ENCODE measurements at regions of chr7 and their contacts with region 1.

Region 1: DNA sequence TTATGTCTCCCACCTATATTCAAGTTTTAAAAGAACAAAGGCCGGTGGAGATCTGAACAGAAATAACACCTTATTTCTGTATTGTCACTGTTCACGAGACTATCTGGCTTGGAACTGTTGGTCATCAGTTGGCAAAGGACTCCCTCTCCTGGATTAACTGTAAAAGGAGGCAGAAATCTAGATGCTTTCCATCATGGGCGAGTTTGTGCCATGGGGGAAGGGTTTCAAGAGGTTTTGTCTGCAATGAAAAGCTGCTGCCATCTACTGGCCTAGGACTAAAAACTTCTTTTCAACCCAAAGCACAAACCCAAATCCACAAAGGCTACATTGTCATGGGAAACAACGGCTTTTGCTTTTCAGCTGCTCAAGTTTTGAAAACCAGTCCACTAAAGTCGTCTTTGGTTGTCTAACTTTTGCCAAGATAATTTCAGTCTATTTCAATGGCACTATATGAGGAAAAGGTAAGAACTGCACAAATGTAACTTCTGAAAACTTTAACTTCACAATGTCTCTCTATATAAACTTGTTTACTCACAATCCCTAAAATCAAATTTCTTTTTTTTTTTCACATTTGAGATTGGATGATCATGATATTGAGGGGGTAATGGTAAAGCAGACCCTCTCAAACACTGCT is 196.8 kb downstream of the SKAP2 start:
- DNase-seq: peak; percentile 84 to 94
- H3K4me3 ChIP-seq: no peak overlapping the region
- H3K27ac ChIP-seq: no peak overlapping the region
- H3K4me1 ChIP-seq: peaks cover 61% of the 10 kb centered on the region
- H3K27me3 ChIP-seq: no peaks in the 10 kb centered on the region
- CTCF ChIP-seq: peak; percentile 99

Region 2: DNA sequence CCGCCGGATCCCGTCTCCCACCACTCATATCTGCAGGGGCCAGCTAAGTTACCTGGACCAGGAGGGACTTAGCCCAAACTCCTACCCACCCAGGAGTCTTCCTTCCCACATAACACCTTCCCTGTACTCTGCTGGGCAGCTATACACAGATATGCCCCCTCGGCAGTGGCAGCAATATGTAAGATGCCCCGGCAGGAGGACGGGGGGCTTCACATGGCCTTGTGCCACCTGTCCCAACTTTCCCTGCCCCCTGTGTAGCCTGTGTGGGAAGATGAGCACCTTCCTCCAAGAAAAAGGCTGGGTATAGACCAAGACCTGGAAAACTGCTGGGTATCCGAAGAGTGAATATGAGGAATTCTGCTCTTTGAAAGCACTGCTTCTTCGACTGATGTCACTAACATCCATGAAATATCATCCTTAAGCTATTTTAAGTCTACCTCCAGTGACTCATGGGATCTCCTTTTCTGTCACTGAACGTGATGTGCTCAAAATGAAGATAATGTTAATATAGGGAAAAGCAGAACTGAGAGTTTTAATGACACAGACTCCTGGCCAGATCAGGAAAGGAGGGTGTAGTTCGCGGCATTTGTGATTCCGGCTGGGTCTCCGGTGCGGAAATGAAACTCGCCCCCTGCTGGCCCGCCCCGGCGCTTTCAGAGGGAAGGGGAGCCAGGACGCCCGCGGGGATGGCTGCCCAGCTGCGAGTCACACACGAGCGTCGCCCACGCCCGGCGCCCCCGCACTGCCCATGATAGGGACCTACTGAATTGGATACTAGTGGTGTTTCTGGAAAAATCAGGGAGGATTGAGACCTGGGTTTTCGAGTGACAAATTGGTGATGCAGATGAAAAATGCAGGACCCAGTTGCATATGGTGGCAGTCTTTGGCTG is 772.5 kb before region 1 on chr7:
- CTCF ChIA-PET with region 1: no interaction called
- POLR2A ChIA-PET with region 1: no interaction called
- intact Hi-C with region 1: loop called (anchors 1 kb)
- DNase-seq: peak in 1 of 2 experiments; percentile 24
- H3K4me3 ChIP-seq: peak overlapping the region; percentile 40; the same call in 1 of the 2 replicates
- H3K27ac ChIP-seq: no peak overlapping the region
- H3K4me1 ChIP-seq: no peaks in the 10 kb centered on the region
- H3K27me3 ChIP-seq: no peaks in the 10 kb centered on the region
- CTCF ChIP-seq: peak; percentile 71

Region 3: DNA sequence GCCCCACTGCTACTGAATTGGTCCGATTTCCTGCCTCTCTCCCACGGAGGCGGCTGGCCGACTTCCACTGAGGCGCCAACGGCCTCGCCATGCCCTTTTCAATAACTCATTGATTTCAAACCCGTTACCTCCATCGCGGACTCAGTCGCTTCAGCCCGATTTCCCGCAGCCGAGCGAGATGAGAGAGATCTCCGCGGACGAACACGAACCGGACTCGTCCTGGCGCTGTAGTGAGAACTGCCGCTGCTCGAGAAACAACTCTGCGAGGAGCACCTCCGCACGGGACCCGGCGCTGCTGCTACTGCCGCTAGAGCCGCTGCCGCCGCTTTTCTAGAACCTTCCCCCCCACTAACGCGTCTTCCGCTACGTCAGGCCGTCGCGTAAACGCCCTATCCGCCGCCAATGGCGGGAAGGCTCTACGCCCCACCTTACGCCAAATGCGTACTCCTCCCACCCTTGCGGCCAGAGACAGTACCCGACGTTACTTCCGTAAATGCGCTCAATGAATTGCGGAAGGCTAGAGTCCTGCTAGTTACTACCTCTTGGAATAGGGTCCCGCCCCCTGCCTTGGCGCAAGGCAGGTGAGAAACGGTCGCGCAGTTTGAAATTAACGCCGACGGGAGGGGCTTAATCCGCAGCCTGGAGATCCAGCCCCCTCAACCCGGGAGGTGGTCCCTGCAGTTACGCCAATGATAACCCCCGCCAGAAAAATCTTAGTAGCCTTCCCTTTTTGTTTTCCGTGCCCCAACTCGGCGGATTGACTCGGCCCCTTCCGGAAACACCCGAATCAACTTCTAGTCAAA is 467.0 kb before region 1 on chr7 and contains the start of gene HNRNPA2B1:
- CTCF ChIA-PET with region 1: no interaction called
- POLR2A ChIA-PET with region 1: no interaction called
- intact Hi-C with region 1: loop called (anchors 5 kb)
- DNase-seq: peak; percentile 99
- H3K4me3 ChIP-seq: peak within 1 kb of the TSS; percentile 98
- H3K27ac ChIP-seq: peak within 1 kb of the TSS; percentile 92
- H3K4me1 ChIP-seq: peaks cover 45% of the 10 kb centered on the region
- H3K27me3 ChIP-seq: no peaks in the 10 kb centered on the region
- CTCF ChIP-seq: no peak
- total RNA-seq, gene HNRNPA2B1: 526 and 792 TPM in 2 replicates

Region 4: GRCh38 chr7:26376175-26376917 is 291.3 kb before region 1 on chr7:
- CTCF ChIA-PET with region 1: interaction called, 6 read pairs
- POLR2A ChIA-PET with region 1: no interaction called
- intact Hi-C with region 1: loop called (anchors 1 kb)
- DNase-seq: peak; percentile 62 to 67
- H3K4me3 ChIP-seq: peak overlapping the region; percentile 81
- H3K27ac ChIP-seq: no peak overlapping the region
- H3K4me1 ChIP-seq: peaks cover 8% of the 10 kb centered on the region
- H3K27me3 ChIP-seq: no peaks in the 10 kb centered on the region
- CTCF ChIP-seq: no peak

Region 5: GRCh38 chr7:26449175-26450165 is 218.1 kb before region 1 on chr7:
- CTCF ChIA-PET with region 1: no interaction called
- POLR2A ChIA-PET with region 1: no interaction called
- intact Hi-C with region 1: loop called (anchors 1 kb)
- DNase-seq: peak; percentile 39 to 63
- H3K4me3 ChIP-seq: no peak overlapping the region
- H3K27ac ChIP-seq: peak overlapping the region; percentile 2; the same call in 1 of the 2 replicates
- H3K4me1 ChIP-seq: peaks cover 34% of the 10 kb centered on the region
- H3K27me3 ChIP-seq: no peaks in the 10 kb centered on the region
- CTCF ChIP-seq: no peak

Region 6: DNA sequence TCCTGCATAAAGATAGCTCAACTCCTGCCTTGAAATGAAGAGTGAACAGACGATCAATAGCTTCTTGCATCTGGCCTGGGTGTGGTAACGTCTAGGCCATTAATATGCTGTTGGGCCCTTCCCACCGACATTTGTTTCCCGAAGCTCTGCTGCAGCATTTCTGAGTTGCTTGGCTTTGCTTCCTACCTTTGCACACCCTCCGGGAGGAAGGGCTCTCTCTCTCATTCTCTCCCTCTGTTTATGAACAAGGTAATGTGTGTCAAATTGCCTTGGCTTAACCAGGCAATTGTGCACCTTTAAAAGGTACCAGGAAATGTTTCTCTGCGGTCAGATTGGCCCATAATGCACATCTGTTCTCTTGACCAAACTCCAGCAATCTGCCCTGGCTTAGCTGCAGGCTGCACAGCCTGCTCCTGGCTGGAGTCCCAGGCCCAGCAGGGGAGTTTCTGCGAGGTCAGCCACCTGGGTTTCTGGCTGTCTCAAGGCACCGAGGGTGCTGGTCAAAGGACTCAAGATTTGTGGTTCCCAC is 152.2 kb before region 1 on chr7:
- CTCF ChIA-PET with region 1: no interaction called
- POLR2A ChIA-PET with region 1: no interaction called
- intact Hi-C with region 1: loop called (anchors 1 kb)
- DNase-seq: peak; percentile 96 to 100
- H3K4me3 ChIP-seq: no peak overlapping the region
- H3K27ac ChIP-seq: peak overlapping the region; percentile 58
- H3K4me1 ChIP-seq: peaks cover 33% of the 10 kb centered on the region
- H3K27me3 ChIP-seq: no peaks in the 10 kb centered on the region
- CTCF ChIP-seq: no peak

Region 7: DNA sequence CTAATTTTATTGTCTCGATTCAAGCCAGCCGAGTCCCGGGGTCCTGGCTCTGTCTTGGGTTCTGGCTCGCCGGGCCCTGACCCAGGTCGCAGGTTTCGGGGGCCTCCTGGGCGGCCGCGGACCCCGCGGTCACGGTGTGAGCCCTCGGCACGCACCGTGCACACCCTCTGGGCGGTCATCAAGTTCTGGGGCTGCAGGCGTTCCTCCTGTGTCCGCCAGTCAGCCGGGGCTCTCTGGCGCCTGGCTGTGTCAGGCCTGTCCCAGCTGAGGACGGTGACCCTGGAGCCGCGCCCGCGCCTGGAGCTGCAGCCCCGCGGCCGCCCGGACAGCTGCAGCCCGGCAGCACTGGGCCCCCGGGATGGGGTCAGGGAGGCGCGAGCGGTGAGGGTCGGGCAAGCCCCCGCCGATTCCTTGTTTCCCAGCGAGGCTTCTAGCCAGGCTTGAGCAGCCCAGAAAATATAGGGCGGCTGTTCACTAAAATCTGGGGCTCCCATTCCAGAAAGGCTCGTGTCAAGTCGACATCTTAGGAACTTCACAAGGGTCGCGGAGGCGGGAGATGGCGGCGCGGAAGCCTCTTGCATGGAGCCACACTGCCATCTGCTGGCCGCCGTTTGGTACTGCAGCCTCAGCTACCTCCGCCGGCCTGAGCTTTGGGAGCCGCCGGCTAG is 493.1 kb after region 1 on chr7:
- CTCF ChIA-PET with region 1: interaction called, 3 read pairs
- POLR2A ChIA-PET with region 1: no interaction called
- intact Hi-C with region 1: loop called (anchors 1 kb)
- DNase-seq: peak; percentile 70 to 88
- H3K4me3 ChIP-seq: peak overlapping the region; percentile 71
- H3K27ac ChIP-seq: no peak overlapping the region
- H3K4me1 ChIP-seq: 0 out of 2 replicates have a peak, but pooled peaks cover 3% of the 10 kb centered on the region
- H3K27me3 ChIP-seq: no peaks in the 10 kb centered on the region
- CTCF ChIP-seq: peak; percentile 100